Sigmoid colon (tissue), 7 donors: ENCODE measurements at regions of chr16 and their contacts with region 1.

Region 1: DNA sequence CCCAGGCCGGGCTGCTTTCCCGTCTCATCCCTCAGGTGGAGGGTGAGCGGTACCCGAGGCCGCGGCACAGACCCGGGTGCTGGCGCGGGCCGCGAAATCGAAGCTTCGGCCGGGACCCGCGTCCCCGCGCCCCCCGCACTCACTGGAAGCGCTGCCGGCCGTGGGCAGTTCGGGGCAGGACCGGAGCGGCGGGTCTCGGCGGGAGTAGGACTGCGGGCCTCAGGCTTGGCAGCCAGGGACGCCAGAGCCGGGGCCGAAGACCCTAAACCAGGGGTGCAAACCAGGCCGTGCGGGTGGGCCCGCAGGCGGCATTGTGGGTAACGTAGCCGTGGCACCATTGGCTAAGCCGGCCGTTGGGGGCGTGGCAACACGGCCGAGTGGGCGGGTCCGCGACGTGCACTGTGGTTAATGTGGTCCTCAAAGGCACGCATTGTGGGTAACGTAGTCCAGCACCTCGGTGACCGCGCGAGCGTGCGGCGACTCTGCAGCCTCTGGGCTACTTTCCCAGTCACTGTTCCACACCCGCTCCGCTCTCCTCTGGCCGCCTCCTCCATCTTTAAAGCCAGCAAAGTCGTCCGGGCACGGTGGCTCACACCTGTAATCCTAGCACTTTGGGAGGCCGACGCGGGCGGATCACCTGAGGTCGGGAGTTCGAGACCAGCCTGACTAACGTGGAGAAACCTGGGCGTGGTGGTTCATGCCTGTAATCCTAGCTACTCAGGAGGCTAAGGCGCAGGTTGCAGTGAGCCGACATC is at the start of gene ZNF500:
- DNase-seq: peak; percentile 98
- H3K4me3 ChIP-seq: peak within 1 kb of the TSS; percentile 80 to 96 (median 88)
- H3K27ac ChIP-seq: peak within 1 kb of the TSS; percentile 91 to 92 (median 92)
- H3K4me1 ChIP-seq: peaks cover 0 to 38% (median 35%) of the 10 kb centered on the region in 4 donors
- H3K27me3 ChIP-seq: no peaks in the 10 kb centered on the region
- CTCF ChIP-seq: no peak
- EP300 ChIP-seq: no peak
- POLR2A ChIP-seq: peak; percentile 37 to 38
- total RNA-seq, gene ZNF500: 10.2 to 14.4 (median 12.8) TPM

Region 2: DNA sequence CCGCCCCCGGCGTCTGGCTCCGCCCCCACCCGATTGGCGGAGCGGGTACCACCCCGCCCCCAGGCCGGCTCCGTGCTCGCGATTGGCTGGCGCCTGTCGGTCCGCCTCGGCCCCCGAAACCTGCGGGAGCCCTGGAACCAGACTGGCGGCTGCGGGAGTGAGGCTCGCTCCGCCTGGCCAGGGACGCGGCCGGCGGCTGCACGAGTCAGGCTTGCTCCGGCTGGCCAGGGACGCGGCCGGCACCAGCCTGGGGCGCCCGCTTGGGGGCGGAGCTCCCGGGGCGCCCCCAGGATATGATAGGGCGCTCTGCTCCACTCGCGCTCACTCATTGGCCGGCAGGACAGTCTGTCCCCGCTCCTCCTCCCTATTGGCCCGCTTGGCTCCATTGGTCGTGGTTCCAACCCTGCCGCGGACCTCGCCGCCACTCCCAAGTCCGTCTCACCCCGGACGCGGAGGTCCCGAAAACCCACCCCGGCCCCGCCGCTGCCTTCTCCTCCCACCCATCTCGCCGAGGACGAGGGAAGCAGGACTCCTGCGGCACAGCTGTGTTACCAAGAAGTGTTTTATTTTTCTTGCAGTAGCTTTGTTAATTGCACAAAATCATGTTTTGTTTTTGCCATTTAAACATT is 35.7 kb after region 1 on chr16:
- intact Hi-C with region 1: loop called (anchors 2 kb)
- DNase-seq: peak; percentile 96
- H3K4me3 ChIP-seq: peak overlapping the region; percentile 55 to 86 (median 74)
- H3K27ac ChIP-seq: peak overlapping the region; percentile 86 to 92 (median 88)
- H3K4me1 ChIP-seq: peaks cover 0 to 41% (median 35%) of the 10 kb centered on the region in 4 donors
- H3K27me3 ChIP-seq: no peaks in the 10 kb centered on the region
- CTCF ChIP-seq: no peak
- EP300 ChIP-seq: no peak
- POLR2A ChIP-seq: no peak

Region 3: GRCh38 chr16:4957720-4958509 is 190.9 kb after region 1 on chr16 and contains the start of gene SEC14L5:
- intact Hi-C with region 1: loop called (anchors 2 kb)
- DNase-seq: peak; percentile 98
- H3K4me3 ChIP-seq: peak within 1 kb of the TSS; percentile 28 to 58 (median 50)
- H3K27ac ChIP-seq: peak within 1 kb of the TSS; percentile 70 to 77 (median 74)
- H3K4me1 ChIP-seq: peaks cover 0 to 27% (median 18%) of the 10 kb centered on the region in 4 donors
- H3K27me3 ChIP-seq: no peaks in the 10 kb centered on the region
- CTCF ChIP-seq: no peak
- EP300 ChIP-seq: no peak
- POLR2A ChIP-seq: peak in 1 of 2 donors; percentile 60
- total RNA-seq, gene SEC14L5: 0.28 to 2.5 (median 0.65) TPM